Gastrocnemius medialis (tissue), 4 donors: ENCODE measurements at regions of chr9 and their contacts with region 1.

Region 1: GRCh38 chr9:115591584-115591984 is 473.6 kb upstream of the TNC start:
- DNase-seq: peak; percentile 62 to 70
- ATAC-seq: peak; percentile 97 to 99
- H3K4me3 ChIP-seq: no peak overlapping the region
- H3K27ac ChIP-seq: peak overlapping the region; percentile 52 to 77 (median 65)
- H3K4me1 ChIP-seq: peaks cover 0 to 6% of the 10 kb centered on the region in 2 donors
- H3K27me3 ChIP-seq: peaks cover 4 to 10% (median 9%) of the 10 kb centered on the region in 3 donors
- CTCF ChIP-seq: peak; percentile 48 to 80 (median 78)
- POLR2A ChIP-seq: no peak

Region 2: GRCh38 chr9:115422932-115423440 is 168.6 kb before region 1 on chr9:
- in situ Hi-C with region 1: no loop called
- intact Hi-C with region 1: no loop called
- DNase-seq: no peak
- ATAC-seq: no peak
- H3K4me3 ChIP-seq: no peak overlapping the region
- H3K27ac ChIP-seq: no peak overlapping the region
- H3K4me1 ChIP-seq: no peaks in the 10 kb centered on the region
- H3K27me3 ChIP-seq: no peaks in the 10 kb centered on the region
- CTCF ChIP-seq: no peak
- POLR2A ChIP-seq: no peak

Region 3: GRCh38 chr9:115649991-115650472 is 58.4 kb after region 1 on chr9:
- in situ Hi-C with region 1: no loop called
- intact Hi-C with region 1: loop called (anchors 10 kb)
- DNase-seq: peak; percentile 60 to 80
- ATAC-seq: peak; percentile 92 to 93
- H3K4me3 ChIP-seq: no peak overlapping the region
- H3K27ac ChIP-seq: peak overlapping the region; percentile 39 to 67 (median 48)
- H3K4me1 ChIP-seq: peaks cover 0 to 4% of the 10 kb centered on the region in 2 donors
- H3K27me3 ChIP-seq: no peaks in the 10 kb centered on the region
- CTCF ChIP-seq: no peak
- POLR2A ChIP-seq: peak in 1 of 2 donors; percentile 19

Region 4: GRCh38 chr9:116000748-116001329 is 409.3 kb after region 1 on chr9:
- in situ Hi-C with region 1: no loop called
- intact Hi-C with region 1: loop called (anchors 10 kb)
- DNase-seq: peak in 1 of 2 donors; percentile 14
- ATAC-seq: peak in 1 of 2 donors; percentile 44
- H3K4me3 ChIP-seq: no peak overlapping the region
- H3K27ac ChIP-seq: no peak overlapping the region
- H3K4me1 ChIP-seq: peaks cover 18 to 38% of the 10 kb centered on the region in 2 donors
- H3K27me3 ChIP-seq: no peaks in the 10 kb centered on the region
- CTCF ChIP-seq: peak; percentile 25 to 57 (median 44)
- POLR2A ChIP-seq: no peak

Region 5: GRCh38 chr9:116494815-116495634 is 903.4 kb after region 1 on chr9:
- in situ Hi-C with region 1: no loop called
- intact Hi-C with region 1: loop called (anchors 10 kb)
- DNase-seq: no peak
- ATAC-seq: peak; percentile 39 to 78
- H3K4me3 ChIP-seq: no peak overlapping the region
- H3K27ac ChIP-seq: no peak overlapping the region
- H3K4me1 ChIP-seq: no peaks in the 10 kb centered on the region
- H3K27me3 ChIP-seq: no peaks in the 10 kb centered on the region
- CTCF ChIP-seq: peak; percentile 46 to 71 (median 58)
- POLR2A ChIP-seq: no peak

Region 6: DNA sequence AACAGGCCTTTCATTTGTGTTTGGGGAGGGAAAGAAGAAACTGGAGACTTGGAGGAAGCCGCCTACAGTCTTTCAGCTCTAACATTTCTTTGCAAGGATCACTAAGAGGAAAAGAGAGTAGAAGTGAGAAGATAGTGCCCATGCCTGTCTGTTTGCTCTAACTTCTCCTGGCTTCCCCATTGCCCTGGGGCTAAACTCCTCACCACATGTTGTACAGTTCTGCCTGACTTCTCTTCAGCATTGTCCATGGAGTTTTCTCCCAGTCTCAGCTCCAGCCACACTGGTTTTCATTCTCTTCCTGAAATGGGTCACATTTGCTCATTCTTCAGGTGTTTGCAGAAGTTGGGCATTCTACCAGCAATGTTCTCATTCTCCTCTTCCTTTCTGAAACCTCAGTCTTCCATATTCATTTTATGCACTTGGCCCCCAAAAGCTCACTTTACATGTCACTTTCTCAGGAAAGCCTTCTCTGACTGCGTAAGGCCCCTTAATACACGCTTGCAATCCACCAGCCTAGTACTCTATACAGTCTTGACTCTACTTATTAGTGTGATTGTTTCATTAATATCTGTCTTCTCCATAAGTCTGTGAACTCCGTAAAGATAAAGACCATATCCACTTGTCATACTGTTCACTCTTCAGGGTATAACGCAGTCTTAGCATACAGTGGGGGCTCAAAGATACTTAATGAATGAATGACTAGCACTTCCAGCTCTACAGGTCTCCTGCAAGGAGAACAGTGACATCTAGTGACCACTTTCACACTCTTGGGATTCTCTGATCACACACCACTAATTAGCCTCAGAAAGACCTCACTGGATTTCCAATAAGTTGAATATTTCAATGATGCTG is 1055.3 kb after region 1 on chr9:
- in situ Hi-C with region 1: loop called in 2 of 4 experiments (anchors 10 to 25 kb)
- intact Hi-C with region 1: loop called (anchors 5 kb)
- DNase-seq: no peak
- ATAC-seq: peak; percentile 76 to 79
- H3K4me3 ChIP-seq: no peak overlapping the region
- H3K27ac ChIP-seq: peak overlapping the region; percentile 81 to 93 (median 82)
- H3K4me1 ChIP-seq: peaks cover 20 to 55% of the 10 kb centered on the region in 2 donors
- H3K27me3 ChIP-seq: no peaks in the 10 kb centered on the region
- CTCF ChIP-seq: peak; percentile 34 to 61 (median 44)
- POLR2A ChIP-seq: no peak